ENCODE measurements at regions of chr7 and their contacts with region 1.

Region 1: GRCh38 chr7:124635416-124635815 is 130.2 kb downstream of the GPR37 start:
- DNase-seq: no peak
- ATAC-seq: no peak
- H3K4me3 Mint-ChIP-seq: no peak overlapping the region
- H3K27ac Mint-ChIP-seq: no peak overlapping the region
- H3K4me1 Mint-ChIP-seq: no peaks in the 10 kb centered on the region
- H3K27me3 Mint-ChIP-seq: no peaks in the 10 kb centered on the region
- CTCF ChIP-seq: no peak

Region 2: GRCh38 chr7:124688991-124689390 is 53.6 kb after region 1 on chr7:
- CTCF ChIA-PET with region 1: no interaction called
- POLR2A ChIA-PET with region 1: no interaction called
- intact Hi-C with region 1: loop called (anchors 5 kb)
- DNase-seq: no peak
- ATAC-seq: no peak
- H3K4me3 Mint-ChIP-seq: no peak overlapping the region
- H3K27ac Mint-ChIP-seq: no peak overlapping the region
- H3K4me1 Mint-ChIP-seq: no peaks in the 10 kb centered on the region
- H3K27me3 Mint-ChIP-seq: no peaks in the 10 kb centered on the region
- CTCF ChIP-seq: no peak